ENCODE measurements at regions of chr2 and their contacts with region 1.

Region 1: GRCh38 chr2:55232084-55232862 is at the starts of genes CLHC1 and RPS27A:
- DNase-seq: peak; percentile 89
- H3K4me3 Mint-ChIP-seq: peak within 1 kb of the TSS; percentile 99
- H3K27ac Mint-ChIP-seq: peak within 1 kb of the TSS; percentile 95
- H3K4me1 Mint-ChIP-seq: peaks cover 43% of the 10 kb centered on the region
- H3K27me3 Mint-ChIP-seq: no peaks in the 10 kb centered on the region
- total RNA-seq, gene CLHC1: 12.0 and 12.3 TPM in 2 replicates
- total RNA-seq, gene RPS27A: 1,030 and 1,063 TPM in 2 replicates

Region 2: DNA sequence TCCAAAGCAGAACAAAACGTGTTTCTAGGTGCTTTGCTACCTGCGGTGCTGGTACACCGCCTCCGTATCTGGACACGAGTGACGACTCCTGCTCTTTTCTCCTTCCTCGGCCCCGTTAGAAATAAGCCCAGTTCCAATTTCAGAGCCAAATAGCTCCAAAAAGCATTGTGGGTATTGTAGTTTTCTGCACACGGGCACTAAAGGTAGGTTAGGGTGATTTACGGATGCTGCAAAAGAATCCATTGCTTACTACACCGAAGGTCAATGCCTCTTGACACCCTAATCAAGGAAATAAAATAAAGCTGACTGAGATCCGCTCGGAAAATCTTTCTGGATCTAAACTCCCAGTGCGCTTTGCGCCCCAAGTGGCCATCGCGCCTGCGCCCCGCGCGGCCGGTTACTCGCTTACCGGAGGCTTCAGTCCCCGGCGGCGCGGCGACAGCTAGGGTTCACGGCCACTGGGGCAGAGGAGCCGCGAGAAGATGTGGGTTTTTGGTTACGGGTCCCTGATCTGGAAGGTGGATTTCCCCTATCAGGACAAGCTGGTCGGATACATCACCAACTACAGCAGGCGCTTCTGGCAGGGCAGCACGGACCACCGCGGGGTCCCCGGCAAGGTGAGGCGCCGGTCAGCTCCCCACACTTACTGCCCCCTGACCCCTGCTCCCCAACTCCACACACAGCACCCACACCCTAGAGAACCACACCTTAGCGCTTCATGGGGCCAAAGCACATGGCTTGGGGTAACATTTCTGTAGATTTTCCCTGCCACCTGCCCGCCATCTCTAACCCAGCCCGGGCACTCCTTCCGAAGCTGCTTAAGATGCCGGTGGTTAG is 1464.7 kb before region 1 on chr2 and contains the start of gene CHAC2:
- intact Hi-C with region 1: loop called (anchors 10 kb)
- DNase-seq: peak; percentile 81
- H3K4me3 Mint-ChIP-seq: peak within 1 kb of the TSS; percentile 90
- H3K27ac Mint-ChIP-seq: peak within 1 kb of the TSS; percentile 95
- H3K4me1 Mint-ChIP-seq: peaks cover 26% of the 10 kb centered on the region
- H3K27me3 Mint-ChIP-seq: no peaks in the 10 kb centered on the region
- total RNA-seq, gene CHAC2: 22.4 and 25.3 TPM in 2 replicates

Region 3: DNA sequence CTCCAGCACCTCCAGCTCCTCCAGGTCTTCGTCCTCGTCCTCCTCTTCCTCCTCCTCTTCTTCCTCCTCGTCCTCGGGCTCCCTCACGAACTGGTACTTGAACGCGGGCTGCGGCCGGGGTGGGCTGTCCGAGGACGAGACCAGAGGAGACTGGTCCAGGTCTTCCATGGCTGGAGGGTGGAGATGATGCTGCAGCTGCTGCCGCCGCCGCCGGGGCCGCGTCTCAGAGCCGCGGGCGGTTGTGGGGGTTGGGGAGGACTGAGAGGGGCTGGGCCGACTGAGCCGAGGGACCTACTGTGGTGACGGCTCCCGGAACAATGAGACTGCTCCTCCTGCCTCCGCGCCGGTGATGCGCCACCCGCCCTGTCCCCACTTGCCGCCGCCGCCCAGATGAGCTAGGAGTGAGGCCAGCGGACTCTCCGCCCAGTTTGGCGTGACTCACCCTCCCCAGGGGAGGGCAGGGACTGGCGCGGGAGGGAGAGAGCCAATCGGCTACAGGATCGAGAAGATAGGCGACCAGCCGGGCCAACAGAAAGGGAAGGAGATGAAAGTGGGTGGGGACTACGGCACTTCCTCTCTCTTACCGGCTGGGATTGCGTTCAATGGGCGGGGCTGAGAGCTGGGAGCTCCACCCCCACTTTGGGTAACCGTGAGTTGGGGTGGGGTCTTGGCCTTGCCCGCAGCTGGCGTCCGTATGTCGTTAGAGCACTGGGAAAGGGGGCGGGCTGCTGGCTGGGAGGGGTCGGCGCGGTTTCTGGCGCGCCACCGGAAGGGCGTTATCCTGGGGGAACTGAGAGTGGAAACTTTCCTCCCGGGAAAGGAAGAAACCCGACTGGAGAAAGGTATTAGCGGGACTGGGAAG is 181.9 kb before region 1 on chr2 and contains the start of gene RTN4:
- intact Hi-C with region 1: loop called (anchors 1 kb)
- DNase-seq: peak; percentile 99
- H3K4me3 Mint-ChIP-seq: peak within 1 kb of the TSS; percentile 99
- H3K27ac Mint-ChIP-seq: peak within 1 kb of the TSS; percentile 99
- H3K4me1 Mint-ChIP-seq: peaks cover 61% of the 10 kb centered on the region
- H3K27me3 Mint-ChIP-seq: no peaks in the 10 kb centered on the region
- total RNA-seq, gene RTN4: 91.2 and 93.3 TPM in 2 replicates

Region 4: GRCh38 chr2:55268907-55269644 is 36.8 kb after region 1 on chr2 and contains the start of gene MTIF2:
- intact Hi-C with region 1: loop called (anchors 1 kb)
- DNase-seq: peak; percentile 82
- H3K4me3 Mint-ChIP-seq: peak within 1 kb of the TSS; percentile 97
- H3K27ac Mint-ChIP-seq: peak within 1 kb of the TSS; percentile 92
- H3K4me1 Mint-ChIP-seq: peaks cover 15% of the 10 kb centered on the region
- H3K27me3 Mint-ChIP-seq: no peaks in the 10 kb centered on the region
- total RNA-seq, gene MTIF2: 40.2 and 42.7 TPM in 2 replicates

Region 5: GRCh38 chr2:55282110-55282917 is 50.0 kb after region 1 on chr2:
- intact Hi-C with region 1: loop called (anchors 5 kb)
- DNase-seq: peak; percentile 85
- H3K4me3 Mint-ChIP-seq: peak overlapping the region; percentile 83
- H3K27ac Mint-ChIP-seq: peak overlapping the region; percentile 85
- H3K4me1 Mint-ChIP-seq: peaks cover 11% of the 10 kb centered on the region
- H3K27me3 Mint-ChIP-seq: peaks cover 2% of the 10 kb centered on the region

Region 6: DNA sequence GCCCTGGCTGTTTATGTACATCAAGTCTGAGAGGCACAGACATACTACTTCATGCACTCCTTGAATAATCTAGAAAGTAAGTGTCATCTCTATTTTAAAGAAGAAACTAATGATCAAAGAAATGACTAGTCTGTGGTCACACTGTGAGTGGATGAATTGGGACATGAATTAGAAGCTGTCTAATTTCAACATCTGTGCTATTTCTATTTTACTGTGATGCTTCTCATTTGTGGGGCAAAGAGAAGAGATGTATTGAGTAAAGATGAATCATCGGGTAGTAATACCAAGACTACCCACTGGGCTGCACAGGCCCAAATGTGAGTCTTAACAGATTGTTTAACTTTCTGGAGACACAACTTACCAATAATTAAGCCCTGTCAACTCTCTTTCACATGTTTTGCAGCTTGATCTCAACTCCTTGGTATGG is 79.2 kb after region 1 on chr2:
- intact Hi-C with region 1: loop called (anchors 1 kb)
- DNase-seq: no peak
- H3K4me3 Mint-ChIP-seq: no peak overlapping the region
- H3K27ac Mint-ChIP-seq: peak overlapping the region; percentile 43
- H3K4me1 Mint-ChIP-seq: peaks cover 22% of the 10 kb centered on the region
- H3K27me3 Mint-ChIP-seq: no peaks in the 10 kb centered on the region

Region 7: GRCh38 chr2:55519938-55520885 is 287.9 kb after region 1 on chr2:
- intact Hi-C with region 1: loop called (anchors 1 kb)
- DNase-seq: no peak
- H3K4me3 Mint-ChIP-seq: peak overlapping the region; percentile 93
- H3K27ac Mint-ChIP-seq: peak overlapping the region; percentile 86
- H3K4me1 Mint-ChIP-seq: peaks cover 13% of the 10 kb centered on the region
- H3K27me3 Mint-ChIP-seq: no peaks in the 10 kb centered on the region